ENCODE measurements at regions of chr3 and their contacts with region 1.

Region 1: DNA sequence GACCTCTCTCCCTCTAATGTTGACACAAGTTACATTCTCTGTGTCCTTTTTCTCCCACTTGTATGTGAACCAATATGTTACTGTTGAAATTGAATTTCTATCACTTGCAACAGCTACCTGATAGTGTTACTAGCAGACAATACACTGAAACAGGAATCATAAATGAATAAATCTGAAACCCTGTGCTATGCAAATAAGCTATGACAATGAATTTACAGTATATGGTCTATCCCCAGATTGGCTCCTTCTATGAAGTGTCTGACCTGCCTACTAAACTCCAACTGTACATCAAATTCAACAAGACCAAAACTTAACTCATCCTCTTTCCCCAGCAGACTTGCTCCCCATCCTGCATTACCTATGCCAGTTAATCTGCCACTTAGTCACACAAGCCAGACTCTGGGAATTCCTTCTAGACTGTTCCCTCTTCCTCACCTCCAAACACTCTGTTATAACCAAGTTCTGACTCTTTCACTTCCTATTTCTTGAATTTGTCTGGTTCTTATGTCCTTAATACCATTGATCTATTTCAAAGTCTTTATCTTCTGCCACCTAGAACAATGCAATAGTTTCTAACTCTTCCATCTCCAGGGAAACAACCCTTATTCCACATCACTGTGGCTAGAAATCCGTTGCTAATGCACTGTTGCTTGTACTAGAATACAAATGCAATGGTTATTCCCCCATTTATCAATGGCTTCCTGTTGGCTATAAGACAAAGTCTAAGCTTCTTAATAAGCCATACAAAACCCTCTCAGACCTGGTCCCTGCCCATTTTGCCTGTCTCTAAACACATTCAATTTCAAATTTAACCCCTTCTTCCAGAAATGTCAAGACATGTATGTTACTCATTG is 13.4 kb upstream of the ZNF639 start:
- DNase-seq: no peak
- H3K4me3 ChIP-seq: no peak overlapping the region
- CTCF ChIP-seq: no peak

Region 2: DNA sequence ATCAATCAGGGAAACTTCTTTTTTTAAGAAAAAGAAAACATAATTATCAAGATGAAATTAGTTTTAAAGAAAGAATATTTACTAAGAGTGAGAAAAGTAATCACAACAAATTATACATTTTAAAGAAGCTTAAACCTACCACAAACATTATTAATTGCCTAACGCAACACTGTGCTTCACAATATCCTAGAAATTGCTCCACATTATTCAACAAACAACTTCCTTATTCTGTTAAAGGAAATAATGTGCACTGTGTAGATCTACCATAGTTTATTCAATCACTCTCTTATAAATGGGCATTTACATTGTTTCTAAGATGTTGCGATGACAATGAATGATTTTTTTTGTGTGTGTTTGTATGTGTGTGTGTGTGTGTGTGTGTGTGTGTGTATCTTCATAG is 1299.1 kb before region 1 on chr3:
- CTCF ChIA-PET with region 1: no interaction called
- POLR2A ChIA-PET with region 1: no interaction called
- DNase-seq: no peak
- H3K4me3 ChIP-seq: no peak overlapping the region
- CTCF ChIP-seq: no peak

Region 3: GRCh38 chr3:178385280-178385952 is 924.0 kb before region 1 on chr3:
- CTCF ChIA-PET with region 1: no interaction called
- POLR2A ChIA-PET with region 1: no interaction called
- DNase-seq: no peak
- H3K4me3 ChIP-seq: no peak overlapping the region
- CTCF ChIP-seq: peak; percentile 50

Region 4: GRCh38 chr3:178960181-178960580 is 349.3 kb before region 1 on chr3:
- CTCF ChIA-PET with region 1: no interaction called
- POLR2A ChIA-PET with region 1: no interaction called
- DNase-seq: no peak
- H3K4me3 ChIP-seq: no peak overlapping the region
- CTCF ChIP-seq: no peak

Region 5: GRCh38 chr3:179071550-179072397 is 237.7 kb before region 1 on chr3 and contains the start of gene ZMAT3:
- CTCF ChIA-PET with region 1: interaction called, 59 read pairs
- POLR2A ChIA-PET with region 1: no interaction called
- DNase-seq: no peak
- H3K4me3 ChIP-seq: peak within 1 kb of the TSS; percentile 92
- CTCF ChIP-seq: no peak

Region 6: DNA sequence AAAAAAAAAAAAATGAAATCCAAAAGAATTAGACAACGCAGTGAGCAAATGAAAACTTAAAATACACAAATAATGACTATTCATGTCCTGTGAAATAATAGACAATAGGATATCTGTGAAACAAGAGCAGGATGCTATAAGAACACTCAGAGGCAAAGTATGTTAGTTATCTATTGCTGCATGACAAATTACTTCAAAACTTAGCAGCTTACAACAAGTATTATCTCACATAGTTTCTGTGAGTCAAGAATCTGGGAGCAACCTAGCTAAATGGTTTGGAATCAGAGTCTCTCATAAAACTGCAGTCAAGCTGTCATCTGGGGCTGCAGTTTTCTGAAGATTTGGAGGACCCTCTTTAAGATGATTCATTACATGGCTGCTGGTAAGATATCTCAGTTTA is 201.4 kb before region 1 on chr3:
- CTCF ChIA-PET with region 1: interaction called, 347 read pairs
- POLR2A ChIA-PET with region 1: no interaction called
- DNase-seq: no peak
- H3K4me3 ChIP-seq: no peak overlapping the region
- CTCF ChIP-seq: no peak

Region 7: DNA sequence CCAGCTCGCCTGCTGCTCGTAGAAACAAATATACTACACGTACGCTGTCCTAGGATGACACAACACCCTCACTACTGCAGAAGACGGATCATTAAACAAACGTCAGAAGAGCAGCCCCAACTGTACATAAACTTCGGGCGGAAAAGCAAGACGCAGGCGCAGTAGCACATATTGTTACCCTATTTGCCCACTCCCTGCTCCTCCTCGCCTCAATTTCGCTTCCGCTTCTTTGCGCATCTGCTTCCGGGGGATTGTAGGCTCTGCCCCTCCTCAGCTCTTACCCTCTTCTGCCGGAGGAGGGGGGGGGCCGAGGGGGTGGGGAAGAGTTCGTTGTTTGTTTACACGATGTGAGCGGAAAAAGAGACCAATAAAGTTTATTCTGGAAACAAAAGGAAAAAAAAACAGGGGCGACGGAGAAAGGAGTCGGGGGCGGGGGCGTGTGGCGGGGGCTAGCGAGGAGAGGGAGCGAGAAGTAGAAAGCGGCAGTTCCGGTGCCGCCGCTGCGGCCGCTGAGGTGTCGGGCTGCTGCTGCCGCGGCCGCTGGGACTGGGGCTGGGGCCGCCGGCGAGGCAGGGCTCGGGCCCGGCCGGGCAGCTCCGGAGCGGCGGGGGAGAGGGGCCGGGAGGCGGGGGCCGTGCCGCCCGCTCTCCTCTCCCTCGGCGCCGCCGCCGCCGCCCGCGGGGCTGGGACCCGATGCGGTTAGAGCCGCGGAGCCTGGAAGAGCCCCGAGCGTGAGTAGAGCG is 161.4 kb before region 1 on chr3 and contains the start of gene PIK3CA:
- CTCF ChIA-PET with region 1: interaction called, 22 read pairs
- POLR2A ChIA-PET with region 1: no interaction called
- DNase-seq: peak; percentile 91
- H3K4me3 ChIP-seq: peak within 1 kb of the TSS; percentile 69
- CTCF ChIP-seq: no peak

Region 8: GRCh38 chr3:179234199-179234598 is 75.3 kb before region 1 on chr3:
- CTCF ChIA-PET with region 1: interaction called, 11 read pairs
- POLR2A ChIA-PET with region 1: no interaction called
- DNase-seq: no peak
- H3K4me3 ChIP-seq: no peak overlapping the region
- CTCF ChIP-seq: no peak

Region 9: GRCh38 chr3:179330438-179330837 is 21.0 kb after region 1 on chr3:
- CTCF ChIA-PET with region 1: no interaction called
- POLR2A ChIA-PET with region 1: no interaction called
- DNase-seq: no peak
- H3K4me3 ChIP-seq: no peak overlapping the region
- CTCF ChIP-seq: no peak